Body of pancreas (tissue), 4 donors: ENCODE measurements at regions of chr1 and their contacts with region 1.

Region 1: DNA sequence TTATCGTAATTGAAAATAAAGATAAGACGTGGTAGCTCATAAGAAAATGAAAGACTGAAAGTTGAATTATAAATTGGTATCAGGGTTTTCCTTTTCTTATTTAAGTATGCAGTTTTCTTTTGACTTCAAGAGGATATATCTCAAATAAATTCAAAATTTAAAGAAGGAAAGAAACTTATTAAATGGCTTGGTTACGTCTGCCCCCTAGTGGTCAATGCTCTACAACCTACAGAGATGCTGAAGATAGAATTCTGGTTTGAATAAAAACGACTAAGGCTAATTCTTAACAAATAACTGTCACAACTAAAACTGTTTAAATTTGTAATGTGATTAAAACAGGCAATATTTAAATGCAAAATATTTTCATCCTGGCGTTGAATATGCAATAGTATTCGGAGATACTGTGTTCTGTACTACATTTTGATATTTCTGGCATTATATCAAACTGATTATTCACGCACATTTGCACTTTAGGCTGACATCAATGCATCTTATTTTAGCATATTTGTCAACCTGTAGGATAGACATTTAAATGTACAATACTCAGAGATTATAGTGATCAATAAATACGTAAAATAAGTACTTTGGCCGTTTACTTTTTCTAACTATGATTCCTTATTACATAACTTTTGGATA is 26.8 kb downstream of the IFI44 start:
- DNase-seq: peak; percentile 57 to 78 (median 70)
- ATAC-seq: peak; percentile 60
- H3K4me3 ChIP-seq: no peak overlapping the region
- H3K27ac ChIP-seq: no peak overlapping the region
- H3K4me1 ChIP-seq: no peaks in the 10 kb centered on the region
- H3K27me3 ChIP-seq: no peaks in the 10 kb centered on the region
- CTCF ChIP-seq: peak; percentile 56 to 97 (median 82)
- POLR2A ChIP-seq: no peak

Region 2: DNA sequence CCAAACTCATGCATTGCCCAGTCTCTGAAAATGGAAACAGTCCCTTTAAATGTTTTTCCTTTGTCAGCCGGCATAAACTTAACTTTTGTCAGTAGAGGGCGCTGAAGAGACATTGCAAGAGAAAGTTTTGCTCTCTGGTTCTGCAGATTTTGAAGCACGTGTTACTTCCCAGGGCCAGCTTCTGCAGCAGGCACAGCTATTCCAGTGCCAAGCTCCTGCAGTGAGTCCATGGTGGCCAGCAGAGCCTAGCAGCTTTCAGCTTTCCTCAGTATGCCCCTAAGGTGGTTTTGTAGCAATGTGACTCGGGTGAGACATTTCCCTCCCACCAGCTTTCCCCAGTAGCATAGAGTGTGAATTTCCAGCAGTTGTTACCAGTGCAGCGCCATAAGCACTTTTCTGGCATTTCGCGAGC is 58.8 kb before region 1 on chr1:
- intact Hi-C with region 1: loop called (anchors 10 kb)
- DNase-seq: peak; percentile 77 to 88 (median 84)
- ATAC-seq: peak; percentile 94
- H3K4me3 ChIP-seq: no peak overlapping the region
- H3K27ac ChIP-seq: no peak overlapping the region
- H3K4me1 ChIP-seq: peaks cover 22% of the 10 kb centered on the region
- H3K27me3 ChIP-seq: no peaks in the 10 kb centered on the region
- CTCF ChIP-seq: peak; percentile 77 to 98 (median 94)
- POLR2A ChIP-seq: no peak